Testis (tissue), 5 donors: ENCODE measurements at regions of chr3 and their contacts with region 1.

Region 1: DNA sequence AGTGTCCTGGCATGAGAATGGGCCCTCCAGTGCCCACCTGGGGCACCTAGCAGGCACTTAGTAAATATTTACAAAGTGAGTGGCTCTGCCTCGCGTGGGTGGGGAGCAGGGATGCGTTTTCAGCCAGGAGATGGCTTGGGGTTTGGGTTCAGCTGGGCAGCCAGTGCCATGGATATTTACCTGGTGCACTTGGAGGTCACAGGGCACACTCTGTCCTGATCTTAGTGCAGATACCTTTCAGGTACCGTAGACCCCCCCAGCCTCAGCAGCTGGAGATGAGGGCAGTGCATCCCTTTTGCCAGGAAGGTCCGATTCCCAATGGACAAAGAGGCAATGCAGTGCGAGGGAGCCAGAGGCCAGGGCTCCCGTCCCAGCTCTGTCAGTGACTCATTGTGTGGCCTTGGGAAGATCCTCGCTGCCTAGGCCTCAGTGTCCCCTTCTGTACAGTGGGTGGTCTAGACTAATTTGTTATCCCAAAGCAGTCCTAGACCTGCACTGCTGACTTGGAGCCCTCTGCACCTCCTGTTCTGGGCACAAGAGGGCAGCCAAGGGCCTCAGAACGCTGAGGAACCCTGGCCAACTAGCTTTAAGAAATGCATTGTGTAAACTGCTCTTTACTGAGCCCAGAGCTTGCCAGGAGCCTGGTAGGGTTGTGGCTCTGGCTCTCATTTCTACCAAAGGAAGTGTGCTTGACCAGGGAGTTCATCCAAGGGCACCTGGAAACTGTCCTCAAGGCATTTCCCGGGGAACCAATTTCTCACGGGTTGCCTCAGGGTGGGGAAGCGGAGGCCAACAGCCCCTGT is 16.0 kb downstream of the HDAC11 start:
- DNase-seq: peak; percentile 88
- H3K4me3 ChIP-seq: no peak overlapping the region
- H3K27ac ChIP-seq: peak overlapping the region; percentile 10 to 44
- H3K4me1 ChIP-seq: peaks cover 10% of the 10 kb centered on the region
- H3K27me3 ChIP-seq: no peaks in the 10 kb centered on the region
- CTCF ChIP-seq: peak; percentile 80 to 92 (median 92)
- POLR2A ChIP-seq: no peak

Region 2: DNA sequence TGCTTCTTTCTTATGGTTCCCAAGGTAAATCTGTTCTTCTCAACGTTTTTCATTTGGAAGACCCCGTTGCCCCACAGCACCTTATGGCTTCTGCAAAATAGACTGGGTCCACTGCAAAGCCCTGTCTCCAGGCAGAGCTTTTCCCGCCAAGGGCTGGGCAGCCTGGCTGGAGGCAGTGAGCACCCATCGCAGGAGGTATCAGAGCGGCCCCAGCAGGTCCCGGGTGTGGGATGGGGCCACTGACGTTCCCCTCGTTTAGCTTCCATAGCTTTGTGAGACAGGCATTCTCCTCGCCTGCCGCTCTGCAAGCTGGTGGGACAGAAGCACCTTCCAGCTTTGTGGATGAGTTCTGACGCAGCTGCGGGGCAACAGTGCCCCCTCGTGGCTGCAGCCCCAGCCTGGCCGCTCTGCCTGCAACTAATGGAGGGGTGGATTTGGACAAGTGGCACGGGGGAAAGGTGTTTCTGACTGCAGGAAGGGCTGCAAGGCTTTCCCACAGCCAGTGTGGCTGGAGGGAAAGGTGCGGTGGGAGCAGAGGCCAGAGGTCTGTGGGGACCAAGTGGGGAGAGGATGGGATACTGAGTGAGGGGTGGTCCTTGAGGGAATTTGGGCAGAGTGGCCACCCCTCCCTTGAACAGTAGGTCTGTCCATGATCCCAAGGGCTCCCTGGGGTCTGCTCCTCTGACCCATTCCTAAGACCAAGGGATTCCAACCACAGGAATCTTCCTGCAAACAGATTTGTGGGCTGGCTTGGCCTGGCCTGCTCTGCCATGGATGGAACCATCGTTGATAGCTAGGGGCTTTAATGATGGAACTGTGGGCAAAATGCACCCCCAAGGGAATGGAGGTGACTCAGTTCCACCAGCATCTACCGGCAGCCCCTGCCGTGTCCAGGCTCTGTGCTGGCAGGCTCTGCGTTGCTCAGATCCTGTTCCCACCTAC is 152.2 kb after region 1 on chr3:
- intact Hi-C with region 1: loop called (anchors 5 kb)
- DNase-seq: peak; percentile 93
- H3K4me3 ChIP-seq: no peak overlapping the region
- H3K27ac ChIP-seq: no peak overlapping the region
- H3K4me1 ChIP-seq: peaks cover 21% of the 10 kb centered on the region
- H3K27me3 ChIP-seq: no peaks in the 10 kb centered on the region
- CTCF ChIP-seq: peak; percentile 98
- POLR2A ChIP-seq: no peak